ENCODE measurements at regions of chr14 and their contacts with region 1.

Region 1: DNA sequence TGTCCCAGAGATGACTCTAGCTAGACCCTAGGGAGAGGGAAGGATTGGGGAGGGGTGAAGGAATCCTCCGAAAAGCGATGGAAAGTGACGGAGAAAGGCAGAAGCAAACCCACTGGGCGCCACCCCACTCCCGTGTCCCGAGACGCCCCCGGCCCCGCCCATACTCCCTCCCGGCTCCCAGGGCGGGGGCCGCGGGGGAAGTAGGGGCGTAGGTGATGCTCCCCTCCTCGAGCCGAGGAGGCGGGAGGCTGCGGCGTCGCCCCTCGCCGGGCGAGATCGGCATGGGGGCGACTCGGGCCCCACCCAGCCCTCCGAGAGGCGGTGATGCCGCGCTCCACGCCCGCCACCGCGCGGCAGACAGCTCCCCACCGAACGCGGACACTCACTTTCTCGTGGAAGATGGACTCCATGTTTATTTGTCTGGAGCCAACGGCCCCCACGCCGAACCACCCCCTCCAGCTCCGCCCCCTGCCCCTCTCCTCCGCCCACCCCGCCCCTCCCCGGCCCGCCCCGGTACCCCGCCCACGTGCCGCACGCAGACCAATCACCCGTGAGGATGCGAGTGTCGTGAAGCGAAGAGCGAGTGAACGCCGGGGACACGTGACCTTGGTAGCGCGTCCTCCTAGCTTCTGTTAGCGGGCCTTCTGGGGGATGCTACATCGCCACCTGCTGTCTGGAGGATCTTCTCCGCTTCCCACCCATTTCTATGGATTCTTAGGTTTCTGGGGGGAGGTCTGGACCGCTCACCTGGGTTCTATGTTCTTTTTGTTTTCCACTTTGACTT is at the start of gene ATXN3:
- DNase-seq: peak; percentile 94
- ATAC-seq: peak; percentile 90
- H3K4me3 Mint-ChIP-seq: peak within 1 kb of the TSS; percentile 100
- H3K27ac Mint-ChIP-seq: peak within 1 kb of the TSS; percentile 98
- H3K4me1 Mint-ChIP-seq: peaks cover 37% of the 10 kb centered on the region
- H3K27me3 Mint-ChIP-seq: no peaks in the 10 kb centered on the region
- CTCF ChIP-seq: 0 out of 2 replicates have a peak, but pooled peaks have one; percentile 22
- total RNA-seq, gene ATXN3: 33.1 to 37.1 TPM (median 33.1 TPM) in 3 replicates

Region 2: DNA sequence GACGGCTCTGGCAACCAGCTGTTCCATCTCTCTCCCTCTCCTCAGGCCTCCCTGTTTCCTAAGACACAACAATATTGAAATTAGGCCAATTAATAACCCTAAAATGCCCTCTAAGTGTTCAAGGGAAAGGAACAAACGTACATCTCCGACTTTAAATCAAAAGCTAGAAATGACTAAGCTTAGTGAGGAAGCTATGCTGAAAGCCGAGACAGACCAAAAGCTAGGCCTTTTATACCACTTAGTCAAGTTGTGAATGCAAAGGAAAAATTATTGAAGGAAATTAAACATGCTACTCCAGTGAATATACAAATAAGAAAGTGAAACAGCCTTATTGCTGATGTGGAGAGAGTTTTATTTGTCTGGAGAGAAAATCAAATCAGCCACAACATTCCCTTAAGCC is 312.6 kb before region 1 on chr14:
- CTCF ChIA-PET with region 1: no interaction called
- POLR2A ChIA-PET with region 1: no interaction called
- DNase-seq: no peak
- ATAC-seq: no peak
- H3K4me3 Mint-ChIP-seq: no peak overlapping the region
- H3K27ac Mint-ChIP-seq: no peak overlapping the region
- H3K4me1 Mint-ChIP-seq: no peaks in the 10 kb centered on the region
- H3K27me3 Mint-ChIP-seq: no peaks in the 10 kb centered on the region
- CTCF ChIP-seq: no peak

Region 3: GRCh38 chr14:92004062-92004461 is 102.3 kb before region 1 on chr14:
- CTCF ChIA-PET with region 1: no interaction called
- POLR2A ChIA-PET with region 1: no interaction called
- DNase-seq: no peak
- ATAC-seq: no peak
- H3K4me3 Mint-ChIP-seq: no peak overlapping the region
- H3K27ac Mint-ChIP-seq: no peak overlapping the region
- H3K4me1 Mint-ChIP-seq: no peaks in the 10 kb centered on the region; the same call in 1 of the 2 replicates
- H3K27me3 Mint-ChIP-seq: no peaks in the 10 kb centered on the region
- CTCF ChIP-seq: no peak

Region 4: DNA sequence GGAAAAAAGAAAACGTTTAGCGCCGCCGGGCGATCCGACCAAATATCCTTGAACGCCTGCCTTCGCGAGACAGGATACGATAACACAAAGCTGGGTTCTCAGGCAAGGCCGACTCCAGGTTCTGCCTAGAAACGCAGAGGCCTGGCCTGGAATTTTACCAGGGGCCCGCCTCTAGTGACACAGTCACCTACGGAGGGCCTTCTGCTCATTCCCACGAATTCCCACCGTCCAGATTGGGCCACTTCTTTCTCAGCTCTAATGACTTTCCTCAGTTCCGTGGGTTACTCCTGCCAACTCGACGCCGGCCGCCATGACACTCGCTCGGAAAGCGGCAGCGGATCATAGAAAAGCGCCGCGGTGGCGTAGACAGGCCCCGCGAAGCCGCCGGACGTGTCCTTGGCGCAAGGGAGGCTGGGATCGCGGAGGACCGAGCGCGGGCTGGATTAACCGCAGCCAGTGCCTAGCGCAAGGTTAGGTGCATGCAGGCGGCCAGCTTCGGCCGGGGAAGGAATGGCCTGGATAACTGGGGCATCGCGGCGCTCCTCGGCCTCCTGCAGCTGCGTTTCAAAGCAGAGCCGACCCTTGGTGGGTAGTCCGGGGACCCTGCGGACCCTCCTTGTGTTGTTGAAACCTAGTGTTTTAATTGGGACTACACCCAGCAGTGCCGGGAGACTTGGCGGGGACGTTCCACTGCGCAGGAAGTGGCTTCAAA is 66.5 kb before region 1 on chr14 and contains the start of gene TRIP11:
- CTCF ChIA-PET with region 1: interaction called, 9 read pairs
- POLR2A ChIA-PET with region 1: interaction called, 12 read pairs
- DNase-seq: peak; percentile 93
- ATAC-seq: peak; percentile 90
- H3K4me3 Mint-ChIP-seq: peak within 1 kb of the TSS; percentile 95
- H3K27ac Mint-ChIP-seq: peak within 1 kb of the TSS; percentile 100
- H3K4me1 Mint-ChIP-seq: peaks cover 15% of the 10 kb centered on the region
- H3K27me3 Mint-ChIP-seq: no peaks in the 10 kb centered on the region
- CTCF ChIP-seq: no peak
- total RNA-seq, gene TRIP11: 32.9 to 36.5 TPM (median 34.4 TPM) in 3 replicates

Region 5: DNA sequence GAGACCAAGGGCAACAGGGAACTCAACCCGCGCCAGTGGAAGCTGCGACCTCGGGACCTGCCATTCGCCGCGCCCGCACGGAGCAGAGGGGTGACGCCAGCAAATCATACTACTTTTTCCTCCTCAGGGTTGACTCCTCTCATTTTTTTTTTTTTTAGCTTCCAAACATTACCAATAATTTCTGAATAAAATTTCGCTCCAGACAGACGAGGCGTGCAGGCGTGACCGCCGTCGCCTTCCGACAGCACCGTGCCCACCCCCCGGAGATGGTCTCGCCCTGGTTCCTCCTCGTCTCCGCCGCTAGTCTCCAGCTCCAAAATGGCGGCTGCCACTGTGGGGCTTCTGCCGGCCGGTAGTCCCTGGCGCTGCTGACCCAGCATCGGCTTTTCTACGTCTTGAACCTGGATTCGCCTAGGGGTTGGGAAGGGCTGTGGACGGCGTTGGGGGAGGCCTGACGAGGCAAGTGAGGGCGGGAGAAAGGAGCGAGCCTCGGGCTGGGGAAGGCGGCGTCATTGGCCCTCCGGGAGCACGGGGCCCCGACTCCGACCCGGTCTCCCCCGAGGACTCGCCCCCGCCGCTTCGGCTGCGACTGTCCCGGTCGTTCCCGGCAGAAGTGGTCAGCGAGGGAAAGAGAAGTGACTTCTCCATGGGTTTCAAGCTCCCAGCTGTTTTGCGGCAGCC is 15.5 kb after region 1 on chr14 and contains the starts of genes CPSF2 and NDUFB1:
- CTCF ChIA-PET with region 1: interaction called, 91 read pairs
- POLR2A ChIA-PET with region 1: interaction called, 30 read pairs
- DNase-seq: peak; percentile 83
- ATAC-seq: peak; percentile 86
- H3K4me3 Mint-ChIP-seq: peak within 1 kb of the TSS; percentile 98
- H3K27ac Mint-ChIP-seq: peak within 1 kb of the TSS; percentile 100
- H3K4me1 Mint-ChIP-seq: peaks cover 21% of the 10 kb centered on the region
- H3K27me3 Mint-ChIP-seq: no peaks in the 10 kb centered on the region
- CTCF ChIP-seq: no peak
- total RNA-seq, gene CPSF2: 102 to 109 TPM (median 109 TPM) in 3 replicates
- total RNA-seq, gene NDUFB1: 114 to 121 TPM (median 116 TPM) in 3 replicates

Region 6: DNA sequence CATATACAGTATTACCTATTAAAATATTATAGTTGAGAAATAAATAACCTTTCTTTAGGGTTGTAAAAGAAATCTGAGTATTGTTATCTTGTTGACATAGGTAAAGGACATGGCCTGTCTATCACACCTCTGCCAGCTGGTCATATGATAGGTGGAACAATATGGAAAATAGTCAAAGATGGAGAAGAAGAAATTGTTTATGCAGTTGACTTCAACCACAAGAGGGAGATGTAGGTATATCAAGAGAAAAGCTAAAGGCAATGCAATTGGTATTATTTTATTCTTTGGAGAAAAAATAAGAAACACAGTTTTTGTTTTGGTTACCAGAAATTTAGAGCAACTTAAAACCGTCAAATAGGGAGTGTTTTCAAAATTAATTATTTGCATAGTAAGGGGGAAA is 28.9 kb after region 1 on chr14:
- CTCF ChIA-PET with region 1: interaction called, 12 read pairs
- POLR2A ChIA-PET with region 1: no interaction called
- DNase-seq: no peak
- ATAC-seq: no peak
- H3K4me3 Mint-ChIP-seq: no peak overlapping the region
- H3K27ac Mint-ChIP-seq: no peak overlapping the region
- H3K4me1 Mint-ChIP-seq: no peaks in the 10 kb centered on the region
- H3K27me3 Mint-ChIP-seq: no peaks in the 10 kb centered on the region
- CTCF ChIP-seq: no peak